T-cell (primary cell): ENCODE measurements at regions of chr6 and their contacts with region 1.

Region 1: DNA sequence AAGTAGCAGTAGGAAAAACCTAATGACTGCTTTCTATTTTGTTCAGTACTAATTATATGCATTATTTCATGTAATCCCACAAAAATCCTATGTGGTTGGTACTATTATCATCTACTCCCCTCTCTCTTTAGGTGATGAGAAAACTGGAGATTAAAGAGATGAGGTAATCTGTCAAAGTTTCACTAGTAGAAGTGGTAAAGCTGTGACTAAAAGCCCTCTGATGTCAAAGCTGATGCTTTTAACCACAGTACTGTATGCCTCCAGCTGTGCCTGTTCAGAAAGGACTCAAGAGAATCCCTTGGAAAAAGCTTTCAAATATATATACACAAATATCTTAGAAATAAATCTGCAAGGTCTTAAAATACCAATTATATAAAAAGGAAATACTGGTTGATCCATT is 38.0 kb downstream of the PHIP start:
- DNase-seq: no peak
- ATAC-seq: no peak
- H3K4me3 ChIP-seq: no peak overlapping the region
- H3K4me3 Mint-ChIP-seq: no peak overlapping the region
- H3K27ac ChIP-seq: no peak overlapping the region
- H3K27ac Mint-ChIP-seq: no peak overlapping the region
- H3K4me1 ChIP-seq: peaks cover 0 to 2% of the 10 kb centered on the region in 2 experiments
- H3K4me1 Mint-ChIP-seq: peaks cover 45 to 71% (median 60%) of the 10 kb centered on the region in 3 donors
- H3K27me3 ChIP-seq: no peaks in the 10 kb centered on the region
- H3K27me3 Mint-ChIP-seq: no peaks in the 10 kb centered on the region

Region 2: DNA sequence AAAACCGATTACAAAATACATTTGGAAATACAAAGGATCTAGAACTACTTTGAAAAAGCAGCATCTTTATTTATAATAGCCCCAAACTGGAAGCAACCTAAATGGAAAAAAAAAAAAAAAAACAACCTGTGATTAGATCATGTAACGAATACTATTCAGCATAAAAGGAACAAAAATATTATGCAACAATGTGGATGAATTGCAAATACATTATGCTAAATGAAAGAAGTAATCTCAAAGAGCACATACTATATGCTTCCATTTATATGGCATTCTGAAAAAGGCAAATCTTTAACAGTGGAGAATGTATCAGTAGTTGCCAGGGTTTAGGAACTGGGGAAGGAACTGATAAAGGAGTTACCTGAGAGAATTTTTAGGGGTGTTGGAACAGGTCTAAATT is 143.9 kb before region 1 on chr6:
- CTCF ChIA-PET with region 1: interaction called, 3 to 11 read pairs
- POLR2A ChIA-PET with region 1: no interaction called
- DNase-seq: no peak
- ATAC-seq: no peak
- H3K4me3 ChIP-seq: no peak overlapping the region
- H3K4me3 Mint-ChIP-seq: no peak overlapping the region
- H3K27ac ChIP-seq: no peak overlapping the region
- H3K27ac Mint-ChIP-seq: no peak overlapping the region
- H3K4me1 ChIP-seq: no peaks in the 10 kb centered on the region
- H3K4me1 Mint-ChIP-seq: no peaks in the 10 kb centered on the region
- H3K27me3 ChIP-seq: no peaks in the 10 kb centered on the region
- H3K27me3 Mint-ChIP-seq: no peaks in the 10 kb centered on the region

Region 3: DNA sequence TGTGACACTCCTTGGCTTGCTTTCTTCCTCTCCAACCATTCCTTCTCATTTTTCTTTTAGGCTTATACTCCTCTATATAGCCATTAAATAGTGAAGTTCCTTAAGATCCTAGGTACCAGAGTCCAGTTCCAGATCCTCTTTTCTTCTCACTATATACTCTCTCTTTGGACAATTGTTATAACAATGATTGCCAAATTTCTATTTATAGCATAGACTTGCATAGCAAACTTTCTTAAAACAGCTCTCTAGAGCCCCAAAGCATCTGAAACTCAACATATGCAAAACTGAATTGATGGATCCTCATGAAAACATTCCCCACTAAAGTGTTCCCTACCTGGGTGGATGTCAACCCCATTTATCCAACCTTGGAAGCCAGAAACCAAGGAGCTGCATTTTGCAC is 24.6 kb after region 1 on chr6:
- CTCF ChIA-PET with region 1: no interaction called
- POLR2A ChIA-PET with region 1: interaction called in 1 of 2 experiments, 13 read pairs
- DNase-seq: no peak
- ATAC-seq: no peak
- H3K4me3 ChIP-seq: no peak overlapping the region
- H3K4me3 Mint-ChIP-seq: no peak overlapping the region
- H3K27ac ChIP-seq: no peak overlapping the region
- H3K27ac Mint-ChIP-seq: no peak overlapping the region
- H3K4me1 ChIP-seq: no peaks in the 10 kb centered on the region
- H3K4me1 Mint-ChIP-seq: peaks cover 20 to 27% (median 23%) of the 10 kb centered on the region in 3 donors
- H3K27me3 ChIP-seq: no peaks in the 10 kb centered on the region
- H3K27me3 Mint-ChIP-seq: no peaks in the 10 kb centered on the region